ENCODE measurements at regions of chr2 and their contacts with region 1.

Region 1: GRCh38 chr2:27369471-27370025 is 590 bp downstream of the EIF2B4 start:
- DNase-seq: peak in 6 of 7 donors; percentile 80 to 87 (median 82)
- H3K4me3 ChIP-seq: peak overlapping the region; percentile 21 to 95 (median 70)
- H3K27ac ChIP-seq: peak overlapping the region; percentile 70 to 98 (median 96)
- H3K4me1 ChIP-seq: peaks cover 17 to 33% of the 10 kb centered on the region in 2 donors
- H3K27me3 ChIP-seq: no peaks in the 10 kb centered on the region
- CTCF ChIP-seq: no peak
- POLR2A ChIP-seq: no peak

Region 2: DNA sequence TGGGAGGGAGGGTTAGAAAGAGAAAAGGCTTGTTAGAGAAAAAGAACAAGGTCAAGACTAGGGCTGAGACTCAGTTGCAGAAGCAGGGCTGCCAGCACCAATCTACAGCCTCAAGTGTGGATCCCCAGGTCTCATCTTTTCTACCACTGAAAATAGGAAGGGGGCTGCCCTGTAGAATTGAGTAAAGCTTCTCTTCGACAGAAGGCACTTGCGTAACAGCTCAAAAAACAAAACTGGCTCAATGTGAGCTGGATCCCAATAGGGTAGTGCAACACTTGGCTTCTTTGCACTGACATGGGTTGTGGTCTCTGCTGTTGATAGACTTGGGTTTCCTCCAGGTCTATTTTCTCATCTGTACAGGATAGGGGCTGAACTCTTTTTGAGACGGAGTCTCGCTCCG is 44.8 kb before region 1 on chr2:
- intact Hi-C with region 1: loop called in 1 of 2 experiments (anchors 5 kb)
- DNase-seq: no peak
- H3K4me3 ChIP-seq: no peak overlapping the region
- H3K27ac ChIP-seq: peak overlapping the region in 4 of 5 donors; percentile 94 to 99 (median 98)
- H3K4me1 ChIP-seq: peaks cover 34 to 35% of the 10 kb centered on the region in 2 donors
- H3K27me3 ChIP-seq: no peaks in the 10 kb centered on the region
- CTCF ChIP-seq: no peak
- POLR2A ChIP-seq: no peak

Region 3: DNA sequence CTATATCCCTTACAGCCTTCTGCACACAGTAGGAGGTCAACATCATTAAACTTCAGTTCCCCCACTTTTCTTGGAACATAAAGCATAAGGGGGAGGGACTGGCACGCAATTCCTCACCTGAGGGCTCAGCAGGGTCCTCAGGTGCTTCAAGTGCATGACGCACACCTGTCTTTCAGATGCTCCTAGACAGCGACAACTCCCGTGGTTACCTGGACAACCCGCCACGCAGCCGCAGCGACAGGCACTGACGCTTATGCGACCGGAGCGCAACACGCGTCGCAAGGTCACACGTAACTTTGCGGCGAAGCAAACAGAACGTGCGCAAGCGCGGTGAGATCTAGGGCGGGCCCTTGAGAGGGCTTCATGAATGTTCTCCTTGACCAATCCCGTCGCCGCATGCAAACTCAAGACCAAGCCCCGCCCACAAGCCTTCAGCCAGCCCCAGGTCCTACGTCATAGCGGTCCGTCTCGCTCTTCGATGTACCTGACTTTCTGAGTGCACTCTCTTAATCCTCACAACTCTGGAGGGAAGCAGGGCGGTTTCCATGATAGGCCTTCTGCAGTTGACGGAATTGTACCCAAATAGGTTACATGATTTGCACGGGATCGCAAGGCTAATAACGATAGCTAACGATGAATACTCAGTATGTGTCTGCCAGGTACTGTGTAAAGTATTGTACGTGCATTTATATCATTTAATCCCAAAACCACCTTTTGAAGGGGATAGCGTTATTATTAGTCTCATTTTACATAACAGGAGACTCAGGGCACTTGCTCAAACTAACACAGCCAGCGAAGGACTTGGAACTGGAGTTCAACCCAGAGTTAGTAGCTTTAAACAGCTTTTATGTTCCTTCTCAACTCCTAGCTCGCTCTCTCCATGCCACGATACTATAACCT is 120.2 kb after region 1 on chr2 and contains the start of gene IFT172:
- intact Hi-C with region 1: no loop called
- DNase-seq: peak; percentile 99 to 100 (median 100)
- H3K4me3 ChIP-seq: peak within 1 kb of the TSS in 3 of 4 donors; percentile 44 to 68 (median 64)
- H3K27ac ChIP-seq: peak within 1 kb of the TSS; percentile 62 to 96 (median 89)
- H3K4me1 ChIP-seq: peaks cover 11 to 23% of the 10 kb centered on the region in 2 donors
- H3K27me3 ChIP-seq: no peaks in the 10 kb centered on the region
- CTCF ChIP-seq: no peak
- POLR2A ChIP-seq: peak; percentile 80 to 94
- total RNA-seq, gene IFT172: 6.3 to 28.1 (median 15.7) TPM

Measured in adrenal gland (tissue), 19 donors.